ENCODE measurements at regions of chr3 and their contacts with region 1.

Region 1: GRCh38 chr3:129316131-129317013 is 37.7 kb downstream of the HMCES start:
- DNase-seq: peak; percentile 85 to 94 (median 93)
- H3K4me3 ChIP-seq: peak overlapping the region; percentile 63
- H3K27ac ChIP-seq: peak overlapping the region; percentile 87 to 90
- H3K4me1 ChIP-seq: peaks cover 8% of the 10 kb centered on the region
- H3K27me3 ChIP-seq: no peaks in the 10 kb centered on the region
- CTCF ChIP-seq: peak; percentile 40 to 52 (median 51)
- EP300 ChIP-seq: no peak
- POLR2A ChIP-seq: peak; percentile 99

Region 2: DNA sequence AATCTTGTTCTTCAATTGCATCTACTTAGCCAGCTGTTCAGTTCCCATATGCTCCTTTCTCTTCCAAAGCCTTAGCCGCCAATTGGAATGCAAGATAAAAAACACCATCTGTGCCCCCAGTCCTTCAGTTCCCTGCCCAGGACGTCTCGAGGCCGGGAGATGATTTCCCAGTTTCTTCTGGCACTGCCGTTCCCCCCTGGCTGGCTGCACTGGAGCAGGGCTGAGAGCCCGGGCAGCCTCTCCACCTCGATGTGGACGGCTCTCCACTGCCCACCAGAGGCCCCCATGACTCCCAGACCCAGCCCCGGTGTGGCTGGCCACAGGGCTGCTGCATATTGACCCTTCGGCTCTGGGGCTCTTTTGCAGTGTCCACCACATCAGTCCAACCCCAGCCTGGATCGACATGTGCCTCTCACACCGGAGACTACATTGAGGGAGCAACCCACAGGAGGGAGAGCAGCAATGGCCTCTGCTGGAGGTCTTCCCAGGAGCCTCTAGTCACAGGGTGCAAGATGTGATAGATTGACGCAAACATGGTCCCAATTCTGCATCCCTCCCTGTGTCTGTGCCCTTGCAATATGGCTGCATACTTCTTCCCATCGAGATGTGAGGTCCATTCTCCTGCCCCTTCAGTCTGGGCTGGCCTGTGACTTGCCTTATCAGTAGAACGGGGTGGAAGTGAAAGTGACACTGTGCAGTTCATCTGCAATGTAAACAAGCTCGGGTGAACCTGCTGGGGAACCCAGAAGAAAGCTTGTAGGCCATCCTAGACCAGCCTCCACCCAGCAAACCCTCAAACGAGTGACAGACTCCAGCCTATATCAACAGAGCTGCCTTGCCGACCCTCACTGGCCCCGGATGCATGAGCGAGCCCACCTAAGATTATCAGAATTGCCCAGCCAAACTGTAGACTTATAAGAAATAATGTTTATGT is 1976.2 kb before region 1 on chr3:
- intact Hi-C with region 1: no loop called
- DNase-seq: no peak
- H3K4me3 ChIP-seq: no peak overlapping the region
- H3K27ac ChIP-seq: no peak overlapping the region
- H3K4me1 ChIP-seq: no peaks in the 10 kb centered on the region
- H3K27me3 ChIP-seq: no peaks in the 10 kb centered on the region
- CTCF ChIP-seq: no peak
- EP300 ChIP-seq: no peak
- POLR2A ChIP-seq: no peak

Region 3: DNA sequence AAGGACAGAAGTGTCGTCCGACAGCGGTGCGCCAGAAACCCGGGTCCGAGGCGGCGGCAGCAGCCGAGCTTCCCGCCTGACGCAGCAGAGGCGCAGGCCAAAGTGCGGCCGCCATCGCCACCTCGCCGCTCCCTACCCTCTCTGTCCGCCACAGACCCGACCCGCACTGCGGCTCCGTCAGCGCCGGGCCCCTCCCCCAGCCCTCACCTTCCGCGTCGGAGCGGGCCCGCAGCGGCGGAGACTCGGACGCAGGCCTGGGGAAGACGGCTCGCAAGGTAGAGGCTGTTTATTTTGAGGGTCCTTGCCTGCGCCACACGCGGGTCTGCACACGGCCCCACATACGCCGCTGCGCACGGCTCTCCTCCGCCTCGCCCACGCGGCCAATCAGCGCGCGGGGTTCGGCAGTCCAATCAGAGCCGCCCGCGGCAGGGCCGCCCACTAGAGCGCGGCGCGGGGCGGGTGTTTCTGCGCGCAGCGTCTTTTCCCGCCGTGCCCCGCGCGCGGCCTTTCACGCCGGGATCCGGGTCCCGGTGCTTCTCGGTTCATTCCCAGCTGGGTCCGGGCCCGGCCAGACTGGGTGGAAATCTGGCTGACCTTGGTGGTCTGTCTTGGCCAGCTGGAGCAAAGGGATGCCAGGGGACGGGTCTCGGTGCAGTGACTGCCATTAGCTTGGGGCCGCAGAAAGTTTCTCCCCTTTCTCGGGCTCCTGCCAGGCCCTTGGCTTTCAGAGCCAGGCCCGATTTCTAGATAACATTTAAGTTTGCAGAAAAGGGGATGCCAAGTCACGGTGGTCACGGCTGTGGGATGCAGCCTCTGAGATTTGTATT is 132.6 kb before region 1 on chr3 and contains the start of gene CNBP:
- intact Hi-C with region 1: loop called in 1 of 4 experiments (anchors 10 kb)
- DNase-seq: peak; percentile 92 to 96 (median 93)
- H3K4me3 ChIP-seq: peak within 1 kb of the TSS; percentile 100
- H3K27ac ChIP-seq: peak within 1 kb of the TSS; percentile 91 to 95
- H3K4me1 ChIP-seq: peaks cover 11% of the 10 kb centered on the region
- H3K27me3 ChIP-seq: no peaks in the 10 kb centered on the region
- CTCF ChIP-seq: peak in 1 of 3 donors; percentile 36
- EP300 ChIP-seq: no peak
- POLR2A ChIP-seq: peak; percentile 99
- total RNA-seq, gene CNBP: 383 to 530 (median 467) TPM

Region 4: DNA sequence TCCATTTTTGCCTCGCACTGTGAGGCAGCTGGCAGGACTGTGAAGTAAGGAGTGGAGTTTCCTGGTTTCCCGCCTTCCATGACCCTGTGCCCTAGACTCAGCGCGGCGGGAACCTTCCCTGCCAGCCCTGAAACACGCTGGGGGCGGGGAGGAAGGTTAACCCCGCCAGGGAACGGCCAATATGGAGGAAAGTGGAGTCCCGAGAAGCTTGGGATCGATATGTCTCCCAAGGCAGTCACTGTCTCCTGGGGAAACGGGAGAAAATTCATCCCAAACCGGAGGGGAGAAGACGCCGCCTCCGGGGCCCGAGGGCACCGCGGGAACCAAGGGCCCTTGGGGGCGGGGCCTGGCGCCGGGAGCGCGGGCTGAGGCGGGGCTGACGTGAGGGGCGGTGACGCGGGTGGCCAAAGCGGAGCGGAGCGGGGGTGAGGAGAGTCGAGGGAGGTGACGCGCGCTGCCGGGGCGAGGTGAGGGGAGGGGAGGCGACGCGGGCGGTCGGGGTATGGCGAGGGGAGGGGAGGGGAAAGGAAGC is 37.9 kb before region 1 on chr3 and contains the start of gene HMCES:
- intact Hi-C with region 1: loop called in 3 of 4 experiments (anchors 1 to 5 kb)
- DNase-seq: peak; percentile 92 to 95 (median 94)
- H3K4me3 ChIP-seq: peak within 1 kb of the TSS; percentile 76
- H3K27ac ChIP-seq: peak within 1 kb of the TSS; percentile 81 to 92
- H3K4me1 ChIP-seq: peaks cover 2% of the 10 kb centered on the region
- H3K27me3 ChIP-seq: no peaks in the 10 kb centered on the region
- CTCF ChIP-seq: no peak
- EP300 ChIP-seq: no peak
- POLR2A ChIP-seq: peak; percentile 66
- total RNA-seq, gene HMCES: 15.5 to 44.5 (median 35.2) TPM

Region 5: GRCh38 chr3:129399145-129399894 is 82.9 kb after region 1 on chr3:
- intact Hi-C with region 1: no loop called
- DNase-seq: peak; percentile 74 to 90 (median 82)
- H3K4me3 ChIP-seq: peak overlapping the region; percentile 96
- H3K27ac ChIP-seq: peak overlapping the region; percentile 43 to 89
- H3K4me1 ChIP-seq: peaks cover 3% of the 10 kb centered on the region
- H3K27me3 ChIP-seq: no peaks in the 10 kb centered on the region
- CTCF ChIP-seq: peak; percentile 78 to 97 (median 91)
- EP300 ChIP-seq: no peak
- POLR2A ChIP-seq: no peak

Region 6: GRCh38 chr3:129424185-129424841 is 107.9 kb after region 1 on chr3:
- intact Hi-C with region 1: no loop called
- DNase-seq: no peak
- H3K4me3 ChIP-seq: no peak overlapping the region
- H3K27ac ChIP-seq: no peak overlapping the region
- H3K4me1 ChIP-seq: no peaks in the 10 kb centered on the region
- H3K27me3 ChIP-seq: no peaks in the 10 kb centered on the region
- CTCF ChIP-seq: no peak
- EP300 ChIP-seq: no peak
- POLR2A ChIP-seq: no peak

Region 7: DNA sequence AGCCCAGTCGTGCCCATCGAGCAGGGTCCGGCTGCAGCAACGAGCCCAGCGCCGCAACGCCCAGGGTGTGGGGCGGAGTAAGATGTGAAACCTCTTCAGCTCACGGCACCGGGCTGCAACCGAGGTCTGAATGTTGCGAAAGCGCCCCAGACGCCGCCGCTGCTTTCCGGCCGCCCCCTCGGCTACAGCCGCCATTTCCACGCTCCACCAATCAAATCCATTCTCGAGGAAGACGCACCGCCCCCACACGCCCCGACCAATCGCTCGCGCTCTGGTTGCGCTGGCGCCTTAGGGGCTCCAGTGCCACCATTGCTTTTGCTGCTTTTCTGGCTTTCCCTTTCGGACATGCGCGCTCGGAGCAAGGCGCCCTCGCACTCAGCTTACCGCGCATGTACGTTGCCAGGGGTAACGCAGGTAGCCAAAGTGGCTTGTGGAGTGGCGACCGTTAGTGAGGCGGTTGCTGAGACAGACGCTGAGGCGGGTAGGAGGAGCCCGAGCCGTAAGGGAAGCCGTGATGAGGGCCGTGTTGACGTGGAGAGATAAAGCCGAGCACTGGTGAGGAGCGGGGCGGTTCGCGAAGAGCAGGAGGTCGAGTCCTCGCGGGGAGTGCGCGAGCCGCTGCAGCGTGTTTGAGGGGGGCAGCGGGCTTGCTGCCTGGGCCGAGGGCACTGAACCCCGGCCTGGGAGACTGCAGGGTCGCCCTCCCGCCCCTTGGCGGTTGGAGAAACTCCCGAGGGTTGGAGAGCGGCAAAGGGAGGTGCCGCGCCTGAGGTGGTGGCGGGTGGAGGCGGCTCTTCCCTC is 123.6 kb after region 1 on chr3 and contains the starts of genes IFT122 and MBD4:
- intact Hi-C with region 1: loop called in 1 of 4 experiments (anchors 10 kb)
- DNase-seq: peak; percentile 95 to 98 (median 97)
- H3K4me3 ChIP-seq: peak within 1 kb of the TSS; percentile 96
- H3K27ac ChIP-seq: peak within 1 kb of the TSS; percentile 88 to 95
- H3K4me1 ChIP-seq: peaks cover 9% of the 10 kb centered on the region
- H3K27me3 ChIP-seq: no peaks in the 10 kb centered on the region
- CTCF ChIP-seq: no peak
- EP300 ChIP-seq: no peak
- POLR2A ChIP-seq: peak; percentile 48
- total RNA-seq, gene IFT122: 27.7 to 58.1 (median 46.7) TPM
- total RNA-seq, gene MBD4: 26.8 to 60.0 (median 29.4) TPM

Region 8: DNA sequence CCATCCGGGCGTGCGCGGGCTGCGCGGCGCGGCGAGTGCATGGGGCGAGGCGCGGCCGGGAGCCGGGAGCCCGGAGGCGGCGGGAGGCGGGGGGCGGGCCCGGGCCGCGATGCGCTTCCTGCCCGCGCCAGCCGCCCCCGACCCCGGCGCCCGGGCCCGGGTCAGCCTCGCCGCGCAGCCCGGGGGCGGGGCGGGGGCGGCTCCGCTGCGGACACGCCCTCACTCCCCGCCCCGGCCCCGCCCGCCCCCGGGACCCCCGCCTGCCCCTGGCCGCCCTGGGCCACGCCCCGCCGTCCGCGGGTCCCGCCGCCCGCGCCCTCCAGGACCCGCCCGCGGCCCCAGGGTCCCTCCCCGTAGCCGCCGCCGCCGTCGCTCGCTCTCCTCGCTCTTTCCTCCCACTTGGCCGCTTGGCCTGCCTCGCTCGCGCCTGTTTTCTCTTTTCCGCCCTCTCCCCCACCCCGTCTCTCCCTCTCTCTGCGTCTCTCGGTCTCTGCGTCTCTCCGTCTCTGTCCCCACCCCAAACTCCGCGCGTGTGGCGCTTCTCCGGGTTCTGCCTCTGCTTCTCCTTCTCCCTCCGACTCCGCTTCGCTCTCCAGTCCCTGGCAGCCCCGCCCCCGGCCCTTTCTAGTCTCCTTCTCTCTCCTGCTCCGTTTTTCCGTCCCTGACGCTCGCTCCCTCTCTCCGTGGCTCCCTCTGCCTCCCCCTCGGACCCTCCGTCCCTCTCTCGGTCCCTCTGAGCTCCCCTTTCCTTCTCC is 290.4 kb after region 1 on chr3 and contains the start of gene PLXND1:
- intact Hi-C with region 1: no loop called
- DNase-seq: peak in 4 of 5 donors; percentile 63 to 73 (median 70)
- H3K4me3 ChIP-seq: peak within 1 kb of the TSS; percentile 50
- H3K27ac ChIP-seq: peak within 1 kb of the TSS; percentile 73 to 79
- H3K4me1 ChIP-seq: peaks cover 11% of the 10 kb centered on the region
- H3K27me3 ChIP-seq: no peaks in the 10 kb centered on the region
- CTCF ChIP-seq: no peak
- EP300 ChIP-seq: no peak
- POLR2A ChIP-seq: no peak
- total RNA-seq, gene PLXND1: 21.6 to 111 (median 57.1) TPM

Measured in ovary (tissue), 10 donors.